HEK293 (cell line): ENCODE measurements at regions of chr9 and their contacts with region 1.

Region 1: DNA sequence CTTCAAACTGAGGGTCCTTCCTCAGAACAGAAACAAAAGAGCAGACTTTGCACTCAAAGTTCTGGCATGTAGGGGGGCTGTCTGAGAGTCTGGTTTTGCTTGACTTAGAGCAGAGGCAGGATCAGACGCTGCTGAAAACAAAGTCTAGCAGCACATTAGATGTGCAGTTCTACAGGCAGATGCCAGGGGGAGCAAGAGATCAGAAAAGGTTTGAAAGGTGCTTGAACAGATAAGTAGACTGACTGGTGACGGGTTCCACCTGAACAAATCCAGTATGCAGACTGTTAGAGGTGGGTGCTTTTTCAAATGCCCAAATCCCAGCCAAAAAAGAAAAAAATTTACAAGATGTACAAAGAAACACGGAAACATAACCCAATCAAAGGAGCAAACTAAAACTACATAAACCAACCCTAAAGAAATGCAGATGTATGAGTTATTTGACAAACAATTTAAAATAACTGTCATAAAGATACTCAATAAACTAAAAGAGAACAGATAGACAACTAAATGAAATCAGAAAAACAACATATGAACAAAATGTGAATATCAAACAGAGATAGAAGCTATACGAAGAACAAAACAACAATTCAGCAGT is 194.7 kb upstream of the FREM1 start:
- H3K4me3 ChIP-seq: no peak overlapping the region
- H3K27ac ChIP-seq: no peak overlapping the region
- H3K4me1 ChIP-seq: no peaks in the 10 kb centered on the region
- CTCF ChIP-seq: no peak

Region 2: GRCh38 chr9:14524873-14525515 is 579.9 kb before region 1 on chr9:
- CTCF ChIA-PET with region 1: no interaction called
- POLR2A ChIA-PET with region 1: no interaction called
- H3K4me3 ChIP-seq: no peak overlapping the region
- H3K27ac ChIP-seq: no peak overlapping the region
- H3K4me1 ChIP-seq: no peaks in the 10 kb centered on the region
- CTCF ChIP-seq: no peak

Region 3: DNA sequence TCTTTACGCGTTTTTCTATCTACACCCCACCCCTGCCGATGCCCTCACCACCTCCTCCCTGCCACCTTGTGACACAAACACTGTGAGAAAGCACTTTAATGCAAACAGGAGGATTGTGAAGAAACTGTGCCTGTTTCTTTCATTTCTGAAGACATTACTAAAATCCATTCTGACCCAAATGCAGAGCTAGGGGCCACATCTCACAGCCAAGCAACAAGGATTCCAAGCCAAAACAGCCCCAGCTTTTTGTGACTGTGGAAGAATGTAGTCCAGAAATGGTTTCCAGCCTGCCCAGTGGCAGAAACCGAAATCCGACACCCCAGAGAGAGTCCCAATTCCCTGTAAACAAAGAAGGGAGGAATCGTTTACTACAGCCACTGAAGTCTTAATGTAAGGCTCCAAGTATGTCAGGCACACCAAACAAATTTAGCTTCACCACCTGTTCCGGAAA is 11.2 kb after region 1 on chr9:
- CTCF ChIA-PET with region 1: interaction called, 21 read pairs
- POLR2A ChIA-PET with region 1: no interaction called
- H3K4me3 ChIP-seq: no peak overlapping the region
- H3K27ac ChIP-seq: no peak overlapping the region
- H3K4me1 ChIP-seq: 0 out of 2 replicates have a peak, but pooled peaks cover 3% of the 10 kb centered on the region
- CTCF ChIP-seq: no peak

Region 4: GRCh38 chr9:15135164-15135792 is 30.4 kb after region 1 on chr9:
- CTCF ChIA-PET with region 1: interaction called, 50 read pairs
- POLR2A ChIA-PET with region 1: interaction called, 11 read pairs
- H3K4me3 ChIP-seq: no peak overlapping the region
- H3K27ac ChIP-seq: no peak overlapping the region
- H3K4me1 ChIP-seq: no peaks in the 10 kb centered on the region
- CTCF ChIP-seq: peak; percentile 52; the same call in 1 of the 2 replicates

Region 5: DNA sequence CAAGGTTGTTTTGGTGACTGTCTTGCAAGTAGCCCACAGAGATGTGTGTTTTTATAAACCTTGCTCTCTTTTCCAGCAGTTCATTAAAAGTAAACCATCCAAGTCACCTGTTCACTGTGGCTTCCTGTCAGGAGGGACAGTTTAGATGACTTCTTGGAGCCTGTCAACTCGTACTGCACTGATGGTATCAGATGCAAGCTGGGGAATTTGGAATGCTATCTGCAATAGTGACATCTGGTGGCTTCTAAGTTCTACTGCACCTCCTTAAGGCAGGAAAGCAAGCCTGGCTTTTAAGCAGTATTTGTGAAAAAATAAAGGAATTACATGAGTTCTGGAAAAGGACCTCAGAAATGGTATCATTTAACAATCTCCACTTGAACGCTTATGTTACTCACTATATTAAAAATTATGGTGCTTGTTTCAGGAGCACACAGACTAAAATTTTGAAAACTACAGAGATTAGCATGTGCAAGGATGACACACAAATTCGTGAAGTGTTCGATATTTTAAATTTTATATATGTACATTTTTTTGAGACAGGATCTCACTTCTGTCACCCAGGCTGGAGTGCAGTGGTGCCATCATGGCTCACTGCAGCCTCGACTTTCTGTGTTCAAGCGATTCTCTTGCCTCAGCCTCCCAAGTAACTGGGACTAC is 38.1 kb after region 1 on chr9:
- CTCF ChIA-PET with region 1: interaction called, 12 read pairs
- POLR2A ChIA-PET with region 1: no interaction called
- H3K4me3 ChIP-seq: no peak overlapping the region
- H3K27ac ChIP-seq: no peak overlapping the region
- H3K4me1 ChIP-seq: peaks cover 5% of the 10 kb centered on the region; the same call in 1 of the 2 replicates
- CTCF ChIP-seq: no peak

Region 6: DNA sequence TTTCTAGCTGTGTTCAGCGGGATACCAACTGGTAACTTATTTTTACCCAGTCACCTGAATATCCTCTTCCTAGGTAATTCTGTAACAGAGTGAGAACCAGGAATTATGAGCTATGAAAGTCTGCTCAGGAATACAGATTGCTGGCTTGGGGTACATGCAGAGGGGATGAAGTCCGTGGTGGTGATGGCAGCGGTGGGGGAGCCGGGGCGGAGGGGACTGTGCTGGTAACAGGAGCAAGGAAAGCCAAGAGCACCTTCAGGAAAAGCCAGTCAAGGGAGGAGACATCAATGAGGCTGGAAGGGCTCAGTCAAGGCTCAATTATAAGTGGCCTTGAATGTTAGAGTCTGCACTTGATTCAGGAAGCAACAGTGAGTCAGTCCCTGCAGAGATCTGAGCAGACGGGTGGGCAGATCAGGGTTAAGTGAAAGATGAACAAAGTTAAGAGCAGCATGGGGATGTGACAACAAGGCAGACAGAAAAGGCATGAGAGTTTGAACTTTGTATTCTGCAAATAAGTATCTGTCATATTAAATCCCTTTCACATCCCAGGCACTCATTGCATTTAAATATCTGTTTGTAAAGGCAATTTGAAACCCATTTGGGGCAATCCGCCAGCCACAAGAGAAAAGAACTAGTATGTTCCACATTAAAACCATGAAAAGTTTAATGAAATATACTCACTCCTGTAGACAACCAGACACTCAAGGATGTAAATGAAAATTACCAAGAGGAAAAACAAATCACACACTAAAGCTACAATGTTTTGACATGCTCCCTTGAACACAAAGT is 100.9 kb after region 1 on chr9:
- CTCF ChIA-PET with region 1: no interaction called
- POLR2A ChIA-PET with region 1: no interaction called
- H3K4me3 ChIP-seq: no peak overlapping the region
- H3K27ac ChIP-seq: no peak overlapping the region
- H3K4me1 ChIP-seq: no peaks in the 10 kb centered on the region
- CTCF ChIP-seq: no peak